Activated T-helper 1 cell treated with anti-CD3 and anti-CD28 coated beads, Interleukin-12 subunit alpha, Interleukin-12 subunit beta, Interleukin-2, Interleukin-4 antibody, amounts not matched to agents 30 ng/mL and 10 ng/mL and 1 ng/mL, durations not matched to agents 14 hours and 24 hours and 36 hours (primary cell): ENCODE measurements at regions of chr13 and their contacts with region 1.

Region 1: DNA sequence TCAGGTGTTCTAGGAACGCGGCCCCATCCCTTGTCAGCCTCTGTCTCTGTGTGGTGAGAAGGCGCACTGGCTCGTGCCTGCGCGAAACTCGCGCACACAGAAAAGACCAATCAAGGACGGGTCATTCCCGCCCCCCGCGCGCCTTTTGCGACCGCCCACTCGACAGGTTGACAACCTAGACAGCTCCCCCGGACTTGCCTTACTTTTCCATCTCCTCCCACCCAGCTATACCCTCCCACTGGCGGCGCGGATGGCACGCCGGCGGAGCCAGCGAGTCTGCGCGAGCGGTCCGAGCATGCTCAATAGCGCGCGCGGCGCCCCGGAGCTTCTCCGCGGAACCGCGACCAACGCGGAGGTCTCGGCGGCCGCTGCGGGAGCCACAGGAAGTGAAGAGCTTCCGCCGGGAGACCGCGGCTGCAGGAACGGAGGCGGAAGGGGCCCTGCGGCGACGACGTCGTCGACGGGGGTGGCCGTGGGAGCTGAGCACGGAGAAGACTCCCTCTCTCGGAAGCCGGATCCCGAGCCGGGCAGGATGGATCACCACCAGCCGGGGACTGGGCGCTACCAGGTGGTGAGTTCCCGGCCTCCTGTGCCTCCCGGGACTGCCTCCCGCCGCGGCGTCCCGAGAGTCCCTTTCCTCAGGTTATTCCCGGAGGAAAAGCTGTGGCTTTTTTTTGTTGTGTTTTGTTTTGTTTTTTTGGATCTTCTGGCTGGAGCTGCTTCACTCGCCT is at the start of gene NDFIP2:
- DNase-seq: peak; percentile 89
- H3K4me3 Mint-ChIP-seq: peak within 1 kb of the TSS; percentile 90
- H3K27ac Mint-ChIP-seq: peak within 1 kb of the TSS; percentile 95
- H3K4me1 Mint-ChIP-seq: peaks cover 76% of the 10 kb centered on the region
- H3K27me3 Mint-ChIP-seq: peaks cover 4% of the 10 kb centered on the region
- total RNA-seq, gene NDFIP2: 250 and 276 TPM in 2 replicates

Region 2: GRCh38 chr13:79385694-79386093 is 95.4 kb before region 1 on chr13:
- intact Hi-C with region 1: loop called (anchors 1 kb)
- DNase-seq: no peak
- H3K4me3 Mint-ChIP-seq: peak overlapping the region; percentile 34
- H3K27ac Mint-ChIP-seq: no peak overlapping the region
- H3K4me1 Mint-ChIP-seq: peaks cover 72% of the 10 kb centered on the region
- H3K27me3 Mint-ChIP-seq: no peaks in the 10 kb centered on the region

Region 3: GRCh38 chr13:79405829-79406596 is 75.1 kb before region 1 on chr13 and contains the start of gene RBM26:
- intact Hi-C with region 1: loop called (anchors 1 kb)
- DNase-seq: peak; percentile 90
- H3K4me3 Mint-ChIP-seq: peak within 1 kb of the TSS; percentile 92
- H3K27ac Mint-ChIP-seq: peak within 1 kb of the TSS; percentile 97
- H3K4me1 Mint-ChIP-seq: peaks cover 24% of the 10 kb centered on the region
- H3K27me3 Mint-ChIP-seq: no peaks in the 10 kb centered on the region
- total RNA-seq, gene RBM26: 99.3 and 107 TPM in 2 replicates

Region 4: DNA sequence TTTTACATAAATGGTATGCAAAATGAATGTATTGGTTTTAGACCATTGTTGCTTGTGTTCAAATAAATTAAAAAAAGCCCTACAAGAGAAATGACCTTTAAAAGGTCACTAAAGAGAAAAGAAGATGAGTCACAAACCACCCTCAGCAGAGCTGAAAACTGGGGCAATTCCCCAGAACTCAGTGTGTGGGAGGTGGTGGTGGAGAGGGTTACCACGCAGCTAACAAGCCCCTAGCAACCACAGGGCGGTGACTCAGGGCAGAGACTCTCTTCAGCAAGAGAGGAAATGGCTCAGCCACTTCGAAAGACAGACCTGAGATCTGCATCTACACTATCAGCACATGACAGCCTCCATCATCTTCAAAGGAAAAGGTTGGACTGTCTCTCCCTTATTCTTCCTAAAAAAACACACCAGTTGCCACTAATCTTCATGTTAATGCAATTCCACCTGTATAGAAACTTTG is 29.6 kb before region 1 on chr13:
- intact Hi-C with region 1: loop called (anchors 1 kb)
- DNase-seq: peak; percentile 89
- H3K4me3 Mint-ChIP-seq: peak overlapping the region; percentile 78
- H3K27ac Mint-ChIP-seq: peak overlapping the region; percentile 98
- H3K4me1 Mint-ChIP-seq: peaks cover 92% of the 10 kb centered on the region
- H3K27me3 Mint-ChIP-seq: no peaks in the 10 kb centered on the region

Region 5: DNA sequence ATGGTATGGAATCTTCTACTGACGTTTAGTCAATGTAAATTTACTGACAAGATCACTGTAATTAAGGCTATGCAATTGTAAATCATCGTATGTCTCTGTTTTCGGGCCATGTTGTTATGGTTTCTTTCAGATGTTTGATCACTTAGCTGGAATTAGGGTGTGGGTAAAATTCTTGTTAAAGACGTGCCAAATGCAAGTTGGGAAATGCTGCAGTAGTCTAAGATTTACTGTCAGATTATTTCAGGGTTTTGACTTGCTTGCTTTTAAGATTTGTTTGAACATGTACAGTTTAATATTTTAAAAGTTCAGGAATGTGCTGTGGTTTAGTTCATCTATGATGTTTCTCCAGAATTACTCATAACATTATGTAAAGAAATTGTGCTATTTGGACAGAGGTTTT is 10.6 kb after region 1 on chr13:
- intact Hi-C with region 1: loop called (anchors 1 kb)
- DNase-seq: no peak
- H3K4me3 Mint-ChIP-seq: peak overlapping the region; percentile 63
- H3K27ac Mint-ChIP-seq: peak overlapping the region; percentile 93
- H3K4me1 Mint-ChIP-seq: peaks cover 94% of the 10 kb centered on the region
- H3K27me3 Mint-ChIP-seq: no peaks in the 10 kb centered on the region

Region 6: GRCh38 chr13:79522583-79522982 is 41.5 kb after region 1 on chr13:
- intact Hi-C with region 1: loop called (anchors 1 kb)
- DNase-seq: peak; percentile 54
- H3K4me3 Mint-ChIP-seq: peak overlapping the region; percentile 43
- H3K27ac Mint-ChIP-seq: peak overlapping the region; percentile 86
- H3K4me1 Mint-ChIP-seq: peaks cover 43% of the 10 kb centered on the region
- H3K27me3 Mint-ChIP-seq: no peaks in the 10 kb centered on the region